ENCODE measurements at regions of chr13 and their contacts with region 1.

Region 1: DNA sequence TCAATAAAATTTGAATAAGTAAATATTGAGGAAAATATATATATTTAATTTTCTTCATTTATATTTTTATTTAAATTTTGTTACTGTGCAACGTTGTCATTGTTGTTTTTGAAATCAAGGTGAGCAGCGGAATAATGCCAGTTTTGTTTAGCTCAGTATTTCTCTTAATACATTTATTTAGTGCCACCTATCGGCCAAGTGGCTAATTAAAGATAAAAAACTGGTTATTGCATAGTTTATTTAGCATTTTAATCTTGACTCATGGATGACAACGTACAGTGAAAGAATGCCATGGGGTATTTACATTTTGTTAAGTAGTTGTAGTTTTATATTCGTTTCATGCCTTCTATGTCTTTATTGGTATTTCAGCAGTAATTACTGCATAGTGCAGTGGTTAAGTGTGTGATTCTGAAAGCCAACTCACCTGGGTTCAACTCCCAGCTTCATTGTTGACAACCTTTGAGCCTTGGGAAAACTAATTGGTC is 265.9 kb downstream of the MYO16 start:
- DNase-seq: no peak
- H3K4me3 ChIP-seq: no peak overlapping the region
- H3K27ac ChIP-seq: no peak overlapping the region
- H3K4me1 ChIP-seq: no peaks in the 10 kb centered on the region
- H3K27me3 ChIP-seq: no peaks in the 10 kb centered on the region
- CTCF ChIP-seq: peak; percentile 52 to 57 (median 52)
- EP300 ChIP-seq: no peak
- POLR2A ChIP-seq: no peak

Region 2: GRCh38 chr13:108227651-108228272 is 667.5 kb before region 1 on chr13:
- intact Hi-C with region 1: loop called (anchors 10 kb)
- DNase-seq: no peak
- H3K4me3 ChIP-seq: no peak overlapping the region
- H3K27ac ChIP-seq: no peak overlapping the region
- H3K4me1 ChIP-seq: peaks cover 26 to 49% (median 38%) of the 10 kb centered on the region in 4 donors
- H3K27me3 ChIP-seq: no peaks in the 10 kb centered on the region
- CTCF ChIP-seq: peak; percentile 67 to 87 (median 77)
- EP300 ChIP-seq: no peak
- POLR2A ChIP-seq: no peak

Region 3: DNA sequence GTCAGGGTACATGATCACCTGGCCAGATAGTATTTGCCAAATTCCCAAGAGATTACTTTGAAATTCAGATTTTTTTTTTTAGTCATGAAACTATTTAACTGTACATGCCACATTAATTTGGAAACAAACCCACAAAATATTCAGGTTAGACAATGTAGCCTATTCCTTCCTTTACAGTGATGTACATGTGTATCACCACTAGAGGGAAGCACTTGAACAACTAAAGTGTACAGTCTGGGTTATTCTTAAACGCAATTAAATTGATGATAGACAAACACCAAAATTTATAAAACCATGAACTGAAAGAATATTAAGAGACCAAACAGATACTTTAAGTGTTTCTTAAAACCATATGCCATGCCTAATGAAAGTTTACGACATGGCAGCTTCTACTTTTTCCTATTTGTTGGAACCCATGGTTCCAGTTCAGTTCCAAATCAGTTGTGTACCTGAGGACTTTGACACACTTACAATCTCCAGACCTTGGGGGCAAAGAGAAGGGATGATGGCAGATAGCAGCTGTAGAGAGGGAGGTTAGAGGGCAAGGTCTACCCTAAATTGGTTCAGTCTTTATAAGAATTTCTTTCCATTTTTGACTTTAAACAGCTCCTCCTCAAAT is 572.9 kb before region 1 on chr13:
- intact Hi-C with region 1: loop called (anchors 5 kb)
- DNase-seq: no peak
- H3K4me3 ChIP-seq: no peak overlapping the region
- H3K27ac ChIP-seq: no peak overlapping the region
- H3K4me1 ChIP-seq: no peaks in the 10 kb centered on the region
- H3K27me3 ChIP-seq: peaks cover 0 to 2% (median 0%) of the 10 kb centered on the region in 4 donors
- CTCF ChIP-seq: peak; percentile 60 to 71 (median 70)
- EP300 ChIP-seq: no peak
- POLR2A ChIP-seq: no peak

Region 4: GRCh38 chr13:108609353-108609752 is 285.9 kb before region 1 on chr13:
- intact Hi-C with region 1: loop called (anchors 5 kb)
- DNase-seq: no peak
- H3K4me3 ChIP-seq: no peak overlapping the region
- H3K27ac ChIP-seq: no peak overlapping the region
- H3K4me1 ChIP-seq: no peaks in the 10 kb centered on the region
- H3K27me3 ChIP-seq: no peaks in the 10 kb centered on the region
- CTCF ChIP-seq: peak; percentile 33 to 39 (median 33)
- EP300 ChIP-seq: no peak
- POLR2A ChIP-seq: no peak

Region 5: DNA sequence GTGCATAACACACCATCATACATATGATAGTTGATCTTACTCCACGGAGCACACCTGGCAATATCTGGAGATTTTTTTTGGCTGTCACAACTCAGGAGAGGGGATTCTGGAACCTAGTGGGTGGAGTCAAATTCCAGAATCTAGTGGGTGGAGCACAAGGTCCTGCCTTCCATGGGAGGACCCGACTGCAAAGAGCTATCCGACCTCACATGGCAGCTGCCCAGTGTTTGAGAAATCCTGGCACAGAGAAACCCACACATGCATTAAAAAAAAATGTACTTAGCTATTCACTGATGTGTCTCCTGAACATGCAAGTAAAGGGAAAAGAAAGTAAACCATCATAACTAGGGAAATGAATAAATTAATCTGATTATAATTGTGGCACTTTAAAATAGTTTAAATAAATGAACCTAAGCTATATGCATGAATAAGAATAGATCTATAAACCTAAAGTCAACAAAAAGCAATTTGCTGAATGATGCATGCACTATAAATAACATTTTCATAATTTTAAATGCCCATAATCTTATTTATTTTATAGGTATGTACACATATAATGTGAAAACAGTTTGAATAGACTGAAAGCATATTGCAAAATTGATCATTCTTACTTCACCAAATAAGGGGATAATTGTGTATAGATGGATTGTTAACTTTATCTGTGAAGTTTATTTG is 34.4 kb after region 1 on chr13:
- intact Hi-C with region 1: no loop called
- DNase-seq: no peak
- H3K4me3 ChIP-seq: no peak overlapping the region
- H3K27ac ChIP-seq: no peak overlapping the region
- H3K4me1 ChIP-seq: peaks cover 0 to 9% (median 2%) of the 10 kb centered on the region in 4 donors
- H3K27me3 ChIP-seq: no peaks in the 10 kb centered on the region
- CTCF ChIP-seq: no peak
- EP300 ChIP-seq: no peak
- POLR2A ChIP-seq: no peak

Region 6: GRCh38 chr13:108947551-108948030 is 52.3 kb after region 1 on chr13:
- intact Hi-C with region 1: no loop called
- DNase-seq: no peak
- H3K4me3 ChIP-seq: no peak overlapping the region
- H3K27ac ChIP-seq: peak overlapping the region in 3 of 4 donors; percentile 22 to 48 (median 38)
- H3K4me1 ChIP-seq: peaks cover 0 to 10% (median 0%) of the 10 kb centered on the region in 4 donors
- H3K27me3 ChIP-seq: no peaks in the 10 kb centered on the region
- CTCF ChIP-seq: no peak
- EP300 ChIP-seq: no peak
- POLR2A ChIP-seq: no peak

Measured in esophagus muscularis mucosa (tissue), 4 donors.